PC-3 (cell line): ENCODE measurements at regions of chr4 and their contacts with region 1.

Region 1: GRCh38 chr4:145732895-145733880 is 53.2 kb downstream of the C4orf51 start:
- DNase-seq: peak; percentile 95
- ATAC-seq: peak; percentile 65
- H3K4me3 ChIP-seq: peak overlapping the region; percentile 68
- H3K27ac ChIP-seq: peak overlapping the region; percentile 94
- H3K4me1 ChIP-seq: peaks cover 51% of the 10 kb centered on the region
- H3K27me3 ChIP-seq: no peaks in the 10 kb centered on the region
- CTCF ChIP-seq: no peak

Region 2: DNA sequence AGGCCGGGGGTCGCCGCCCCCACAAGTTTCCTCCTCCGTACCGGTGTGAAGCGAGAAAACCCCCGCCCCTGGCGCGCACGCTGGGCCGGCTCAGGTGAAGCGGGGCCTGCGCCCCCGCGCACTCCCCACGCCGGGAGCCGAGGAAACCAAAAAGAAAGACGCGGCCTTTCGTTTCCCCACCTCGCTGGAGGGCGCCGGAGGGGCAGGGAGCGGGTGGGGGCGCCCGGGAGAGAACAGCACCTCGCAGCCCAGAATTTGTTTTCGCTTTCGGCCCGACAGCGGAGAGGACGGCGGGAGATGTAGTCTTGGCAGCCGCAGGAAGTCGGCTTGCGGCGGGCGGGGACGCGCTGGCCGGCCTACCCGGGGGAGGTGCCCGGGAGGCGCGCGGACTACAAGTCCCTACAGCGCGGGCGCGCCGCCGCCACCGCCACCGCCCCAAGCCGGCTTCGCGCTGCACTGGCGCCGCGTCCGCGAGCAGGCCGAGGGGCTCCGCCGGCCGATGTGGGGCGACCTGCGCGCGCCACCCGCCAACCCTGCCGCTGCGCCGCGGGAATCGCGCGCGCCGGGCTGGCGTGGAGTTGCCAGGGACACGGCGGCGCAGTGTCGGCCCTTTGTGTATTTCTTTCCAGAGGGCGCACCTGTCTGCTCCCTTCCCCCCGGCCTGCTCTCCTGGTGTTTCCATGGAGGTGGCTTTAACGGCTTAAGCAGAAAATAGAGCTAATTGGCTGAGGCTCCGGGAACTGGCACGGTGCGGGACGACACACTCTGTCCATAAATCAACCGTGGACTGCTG is 552.7 kb before region 1 on chr4 and contains the start of gene OTUD4:
- CTCF ChIA-PET with region 1: no interaction called
- POLR2A ChIA-PET with region 1: no interaction called
- intact Hi-C with region 1: loop called (anchors 10 kb)
- DNase-seq: peak; percentile 96
- ATAC-seq: peak; percentile 79
- H3K4me3 ChIP-seq: peak within 1 kb of the TSS; percentile 87
- H3K27ac ChIP-seq: peak within 1 kb of the TSS; percentile 78
- H3K4me1 ChIP-seq: peaks cover 21% of the 10 kb centered on the region
- H3K27me3 ChIP-seq: no peaks in the 10 kb centered on the region
- CTCF ChIP-seq: no peak; the same call in 1 of the 2 replicates
- total RNA-seq, gene OTUD4: 13.6 and 20.6 TPM in 2 replicates

Region 3: DNA sequence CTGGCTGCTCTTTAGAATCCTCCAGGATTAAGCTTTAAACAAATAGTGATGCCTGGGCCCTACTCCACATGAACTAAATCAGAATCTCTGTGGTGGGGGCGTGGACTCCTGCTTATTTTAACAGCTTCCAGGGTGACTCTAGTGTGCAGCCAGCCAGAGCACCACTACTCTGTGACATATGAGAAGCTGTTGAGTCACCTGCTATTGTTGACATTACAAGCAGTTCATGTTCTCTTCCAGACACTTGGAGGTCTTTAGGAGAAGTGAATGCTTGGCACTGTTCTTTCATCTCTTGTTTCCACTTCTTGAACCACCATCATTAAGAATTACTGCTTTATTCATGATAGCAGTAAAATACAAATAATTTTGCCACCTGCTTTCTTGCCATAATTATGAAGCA is 53.7 kb before region 1 on chr4:
- CTCF ChIA-PET with region 1: no interaction called
- POLR2A ChIA-PET with region 1: no interaction called
- intact Hi-C with region 1: loop called (anchors 1 kb)
- DNase-seq: peak; percentile 92
- ATAC-seq: peak; percentile 100
- H3K4me3 ChIP-seq: no peak overlapping the region
- H3K27ac ChIP-seq: peak overlapping the region; percentile 32
- H3K4me1 ChIP-seq: peaks cover 16% of the 10 kb centered on the region
- H3K27me3 ChIP-seq: no peaks in the 10 kb centered on the region
- CTCF ChIP-seq: no peak

Region 4: DNA sequence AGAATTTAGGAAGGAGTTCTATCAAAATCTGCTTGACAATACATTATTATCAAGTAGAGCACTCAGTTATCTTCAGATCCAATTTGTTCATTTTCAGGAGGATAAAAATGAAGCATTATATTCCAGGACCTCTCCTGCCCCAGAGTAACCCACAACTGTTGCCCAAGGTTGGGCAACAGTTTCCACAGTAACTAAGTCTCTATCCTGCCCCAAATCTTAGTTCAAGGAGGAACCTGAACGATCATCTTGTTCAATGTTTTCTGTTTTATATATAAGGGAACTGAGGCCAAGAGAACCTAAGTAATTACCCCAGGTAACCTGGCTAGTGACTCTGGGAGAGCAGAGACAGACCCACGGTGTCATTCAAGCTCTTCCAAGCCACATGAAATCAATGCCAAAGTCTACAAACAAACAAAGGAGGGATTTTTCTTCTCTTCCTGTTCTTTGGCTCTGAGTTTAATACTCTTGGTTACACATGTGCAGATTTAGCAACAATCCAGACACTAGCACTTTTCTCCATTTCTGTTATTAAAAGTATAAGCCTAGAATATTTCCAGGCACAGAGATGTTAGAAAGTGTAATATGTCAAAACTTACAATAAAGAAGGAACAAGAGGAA is 52.3 kb after region 1 on chr4:
- CTCF ChIA-PET with region 1: no interaction called
- POLR2A ChIA-PET with region 1: interaction called, 6 read pairs
- intact Hi-C with region 1: loop called (anchors 2 kb)
- DNase-seq: peak; percentile 48
- ATAC-seq: peak; percentile 25; the same call in 1 of the 2 replicates
- H3K4me3 ChIP-seq: no peak overlapping the region
- H3K27ac ChIP-seq: peak overlapping the region; percentile 1; the same call in 1 of the 2 replicates
- H3K4me1 ChIP-seq: peaks cover 54% of the 10 kb centered on the region
- H3K27me3 ChIP-seq: no peaks in the 10 kb centered on the region
- CTCF ChIP-seq: no peak

Region 5: GRCh38 chr4:145808021-145808650 is 74.9 kb after region 1 on chr4:
- CTCF ChIA-PET with region 1: no interaction called
- POLR2A ChIA-PET with region 1: no interaction called
- intact Hi-C with region 1: loop called (anchors 1 kb)
- DNase-seq: peak; percentile 98
- ATAC-seq: peak; percentile 68
- H3K4me3 ChIP-seq: peak overlapping the region; percentile 30; the same call in 1 of the 2 replicates
- H3K27ac ChIP-seq: peak overlapping the region; percentile 92
- H3K4me1 ChIP-seq: peaks cover 48% of the 10 kb centered on the region
- H3K27me3 ChIP-seq: no peaks in the 10 kb centered on the region
- CTCF ChIP-seq: no peak

Region 6: DNA sequence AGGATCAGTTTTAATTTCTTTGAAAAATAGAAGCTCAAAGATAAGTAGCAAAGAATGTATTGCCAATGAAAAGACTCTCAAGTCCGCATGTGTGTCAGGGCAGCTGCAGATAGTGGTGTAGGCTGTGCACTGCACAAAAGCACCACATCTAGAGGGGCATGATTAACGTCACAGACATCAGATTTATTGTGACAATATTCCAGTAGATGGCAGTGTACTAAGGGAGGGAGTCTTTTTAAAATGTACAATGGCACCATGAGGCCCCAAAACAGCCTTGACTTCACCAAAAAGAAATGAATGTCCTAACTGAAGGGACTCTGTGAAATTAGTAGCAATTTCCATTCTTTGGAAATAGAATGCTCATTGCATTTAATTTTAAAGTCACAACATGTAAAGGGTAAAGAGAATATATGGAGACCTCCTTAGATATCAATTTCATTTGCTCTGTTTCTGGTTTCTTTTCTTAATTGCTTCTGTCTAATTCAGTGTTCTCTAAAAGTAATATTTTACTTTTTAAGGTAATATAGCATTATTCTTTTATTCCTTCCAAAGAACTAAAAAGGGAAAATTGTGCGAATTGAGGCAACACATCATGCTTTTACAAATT is 107.1 kb after region 1 on chr4:
- CTCF ChIA-PET with region 1: no interaction called
- POLR2A ChIA-PET with region 1: no interaction called
- intact Hi-C with region 1: loop called (anchors 10 kb)
- DNase-seq: peak; percentile 82
- ATAC-seq: peak; percentile 90
- H3K4me3 ChIP-seq: no peak overlapping the region
- H3K27ac ChIP-seq: no peak overlapping the region
- H3K4me1 ChIP-seq: peaks cover 9% of the 10 kb centered on the region; the same call in 1 of the 2 replicates
- H3K27me3 ChIP-seq: no peaks in the 10 kb centered on the region
- CTCF ChIP-seq: peak; percentile 83

Region 7: GRCh38 chr4:145887241-145887991 is 154.2 kb after region 1 on chr4:
- CTCF ChIA-PET with region 1: no interaction called
- POLR2A ChIA-PET with region 1: no interaction called
- intact Hi-C with region 1: loop called (anchors 2 kb)
- DNase-seq: peak; percentile 22
- ATAC-seq: peak; percentile 56
- H3K4me3 ChIP-seq: no peak overlapping the region
- H3K27ac ChIP-seq: no peak overlapping the region
- H3K4me1 ChIP-seq: no peaks in the 10 kb centered on the region
- H3K27me3 ChIP-seq: no peaks in the 10 kb centered on the region
- CTCF ChIP-seq: peak; percentile 24; the same call in 1 of the 2 replicates